Mammary epithelial cell (primary cell): ENCODE measurements at regions of chr2 and their contacts with region 1.

Region 1: GRCh38 chr2:230949966-230950873 is 25.2 kb upstream of the GPR55 start:
- DNase-seq: no peak
- H3K4me3 ChIP-seq: no peak overlapping the region
- H3K27ac ChIP-seq: no peak overlapping the region
- H3K4me1 ChIP-seq: no peaks in the 10 kb centered on the region
- H3K27me3 ChIP-seq: no peaks in the 10 kb centered on the region
- CTCF ChIP-seq: no peak

Region 2: GRCh38 chr2:230564805-230565779 is 385.1 kb before region 1 on chr2:
- CTCF ChIA-PET with region 1: no interaction called
- dilution Hi-C with region 1: no loop called
- in situ Hi-C with region 1: no loop called
- intact Hi-C with region 1: no loop called
- DNase-seq: no peak
- H3K4me3 ChIP-seq: no peak overlapping the region
- H3K27ac ChIP-seq: no peak overlapping the region
- H3K4me1 ChIP-seq: no peaks in the 10 kb centered on the region
- H3K27me3 ChIP-seq: no peaks in the 10 kb centered on the region
- CTCF ChIP-seq: no peak

Region 3: GRCh38 chr2:230864598-230865306 is 85.5 kb before region 1 on chr2 and contains the start of gene ITM2C:
- CTCF ChIA-PET with region 1: no interaction called
- dilution Hi-C with region 1: loop called (anchors 5 kb)
- in situ Hi-C with region 1: no loop called
- intact Hi-C with region 1: no loop called
- DNase-seq: peak; percentile 53
- H3K4me3 ChIP-seq: peak within 1 kb of the TSS; percentile 49 to 69 (median 66)
- H3K27ac ChIP-seq: no peak within 1 kb of the TSS
- H3K4me1 ChIP-seq: no peaks in the 10 kb centered on the region
- H3K27me3 ChIP-seq: no peaks in the 10 kb centered on the region
- CTCF ChIP-seq: peak; percentile 4 to 37
- total RNA-seq, gene ITM2C: 24.8 to 47.1 TPM

Region 4: DNA sequence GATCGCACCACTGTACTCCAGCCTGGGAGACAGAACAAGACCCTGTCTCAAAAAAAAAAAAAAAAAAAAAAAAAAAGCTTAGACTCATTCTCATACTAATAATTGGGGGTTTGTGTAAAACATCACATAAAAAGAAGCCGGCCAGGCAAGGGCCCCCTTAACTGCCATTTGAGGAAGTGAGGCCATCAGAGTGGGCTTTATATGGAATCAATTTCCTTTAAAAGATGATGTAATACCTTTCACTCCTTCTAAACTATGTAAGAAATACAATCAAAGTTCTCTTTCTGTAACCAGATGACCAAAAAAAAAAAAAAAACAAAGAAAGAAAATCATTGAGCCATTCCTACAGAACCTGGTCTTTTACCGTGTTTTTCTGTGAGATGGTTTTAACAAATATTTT is 12.1 kb before region 1 on chr2:
- CTCF ChIA-PET with region 1: no interaction called
- dilution Hi-C with region 1: no loop called
- in situ Hi-C with region 1: no loop called
- intact Hi-C with region 1: loop called (anchors 1 kb)
- DNase-seq: no peak
- H3K4me3 ChIP-seq: no peak overlapping the region
- H3K27ac ChIP-seq: no peak overlapping the region
- H3K4me1 ChIP-seq: no peaks in the 10 kb centered on the region
- H3K27me3 ChIP-seq: no peaks in the 10 kb centered on the region
- CTCF ChIP-seq: no peak

Region 5: DNA sequence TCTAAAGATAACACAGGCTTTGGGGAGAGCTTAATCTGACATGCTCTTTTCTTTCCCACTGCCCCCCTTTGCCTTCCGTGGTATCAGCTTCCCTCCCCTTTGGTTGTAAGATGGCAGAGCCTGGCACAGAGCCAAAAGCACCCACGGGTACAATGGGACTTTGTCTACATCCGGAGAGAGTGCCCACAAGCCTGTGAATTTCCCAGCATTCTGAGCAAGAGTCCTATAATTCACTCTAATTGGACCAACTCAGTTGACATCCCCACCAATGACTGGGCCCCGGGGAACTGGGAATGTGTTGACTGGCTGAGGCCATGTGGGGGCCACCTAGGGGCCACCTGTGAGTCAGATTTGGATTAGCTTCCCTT is 67.0 kb after region 1 on chr2:
- CTCF ChIA-PET with region 1: no interaction called
- dilution Hi-C with region 1: loop called (anchors 5 kb)
- in situ Hi-C with region 1: no loop called
- intact Hi-C with region 1: no loop called
- DNase-seq: no peak
- H3K4me3 ChIP-seq: no peak overlapping the region
- H3K27ac ChIP-seq: no peak overlapping the region
- H3K4me1 ChIP-seq: no peaks in the 10 kb centered on the region
- H3K27me3 ChIP-seq: no peaks in the 10 kb centered on the region
- CTCF ChIP-seq: no peak